Tibial artery (tissue), 4 donors: ENCODE measurements at regions of chr3 and their contacts with region 1.

Region 1: GRCh38 chr3:184135149-184135910 is at the start of gene EIF2B5:
- DNase-seq: peak; percentile 92 to 93
- H3K4me3 ChIP-seq: peak within 1 kb of the TSS; percentile 74 to 93
- H3K27ac ChIP-seq: peak within 1 kb of the TSS; percentile 86 to 95
- H3K4me1 ChIP-seq: peaks cover 0 to 25% (median 11%) of the 10 kb centered on the region in 4 donors
- H3K27me3 ChIP-seq: no peaks in the 10 kb centered on the region
- CTCF ChIP-seq: peak in 1 of 2 experiments; percentile 21

Region 2: DNA sequence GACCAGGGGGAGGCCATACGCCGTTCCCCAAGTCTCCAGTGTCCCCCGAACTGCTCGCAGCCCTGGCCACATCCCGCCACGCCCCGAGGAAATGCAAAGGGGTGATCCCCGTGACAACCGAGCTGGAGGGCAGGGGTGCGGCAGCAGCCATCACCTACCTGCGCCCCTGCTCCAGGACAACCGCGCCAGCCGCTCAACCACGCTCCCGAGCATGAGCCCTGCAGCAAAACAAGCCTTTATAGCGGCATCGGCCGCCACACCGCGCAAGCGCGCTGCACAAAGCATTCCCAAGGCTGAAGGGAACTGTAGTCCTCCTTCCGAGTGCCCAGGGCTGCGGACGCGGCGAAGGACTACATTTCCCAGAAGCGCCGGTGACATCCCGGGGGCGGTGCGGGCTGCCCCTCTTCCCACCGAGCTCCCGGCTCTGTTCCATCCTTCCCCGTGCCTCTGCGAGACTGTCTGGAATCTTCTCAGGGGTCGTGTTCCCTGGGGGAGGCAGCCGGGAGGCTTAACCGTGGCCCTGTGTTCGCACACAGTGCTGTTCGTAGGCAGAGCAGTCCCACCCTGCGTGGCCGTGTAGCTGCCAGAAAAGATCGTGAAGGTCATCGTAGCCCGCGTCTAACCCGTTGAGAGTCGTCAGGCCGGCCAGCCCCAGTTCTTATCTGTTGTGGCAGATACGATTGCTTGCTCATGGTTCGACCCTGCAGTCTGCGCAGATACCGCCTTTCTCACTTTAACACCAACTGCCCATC is 117.5 kb before region 1 on chr3 and contains the start of gene ABCC5:
- intact Hi-C with region 1: loop called (anchors 5 kb)
- DNase-seq: peak; percentile 89 to 95
- H3K4me3 ChIP-seq: peak within 1 kb of the TSS; percentile 85 to 100
- H3K27ac ChIP-seq: peak within 1 kb of the TSS; percentile 70 to 78
- H3K4me1 ChIP-seq: peaks cover 0 to 16% (median 10%) of the 10 kb centered on the region in 4 donors
- H3K27me3 ChIP-seq: no peaks in the 10 kb centered on the region
- CTCF ChIP-seq: peak in 1 of 2 experiments; percentile 22

Region 3: DNA sequence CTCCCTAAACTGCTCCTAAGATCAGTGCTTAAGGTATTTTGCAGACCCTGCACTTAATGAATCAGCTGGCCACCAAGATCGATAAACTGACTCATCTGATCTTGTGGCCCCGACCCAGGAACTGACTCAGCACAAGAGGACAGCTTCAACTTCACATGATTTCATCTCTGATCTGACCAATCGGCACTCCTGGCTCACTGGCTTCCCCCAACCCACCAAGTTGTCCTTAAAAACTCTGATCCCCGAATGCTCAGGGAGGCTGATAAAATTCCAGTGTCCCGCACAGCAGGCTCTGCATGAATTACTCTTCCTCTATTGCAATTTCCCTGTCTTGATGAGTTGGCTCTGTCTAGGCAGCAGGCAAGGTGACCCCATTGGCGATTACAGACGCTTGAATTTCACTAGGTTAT is 25.0 kb before region 1 on chr3:
- intact Hi-C with region 1: no loop called
- DNase-seq: no peak
- H3K4me3 ChIP-seq: no peak overlapping the region
- H3K27ac ChIP-seq: no peak overlapping the region
- H3K4me1 ChIP-seq: no peaks in the 10 kb centered on the region
- H3K27me3 ChIP-seq: peaks cover 0 to 5% of the 10 kb centered on the region in 2 donors
- CTCF ChIP-seq: no peak

Region 4: GRCh38 chr3:184154885-184155643 is 19.7 kb after region 1 on chr3 and contains the start of gene DVL3:
- intact Hi-C with region 1: loop called (anchors 2 kb)
- DNase-seq: peak; percentile 68 to 87
- H3K4me3 ChIP-seq: peak within 1 kb of the TSS; percentile 95 to 97
- H3K27ac ChIP-seq: peak within 1 kb of the TSS; percentile 94 to 98
- H3K4me1 ChIP-seq: peaks cover 0 to 52% (median 33%) of the 10 kb centered on the region in 4 donors
- H3K27me3 ChIP-seq: no peaks in the 10 kb centered on the region
- CTCF ChIP-seq: no peak

Region 5: GRCh38 chr3:184298759-184299496 is 163.6 kb after region 1 on chr3 and contains the start of gene PSMD2:
- intact Hi-C with region 1: loop called (anchors 5 kb)
- DNase-seq: peak; percentile 96 to 99
- H3K4me3 ChIP-seq: peak within 1 kb of the TSS; percentile 73 to 75
- H3K27ac ChIP-seq: peak within 1 kb of the TSS; percentile 68 to 85
- H3K4me1 ChIP-seq: peaks cover 0 to 25% (median 18%) of the 10 kb centered on the region in 4 donors
- H3K27me3 ChIP-seq: no peaks in the 10 kb centered on the region
- CTCF ChIP-seq: peak in 1 of 2 experiments; percentile 7

Region 6: DNA sequence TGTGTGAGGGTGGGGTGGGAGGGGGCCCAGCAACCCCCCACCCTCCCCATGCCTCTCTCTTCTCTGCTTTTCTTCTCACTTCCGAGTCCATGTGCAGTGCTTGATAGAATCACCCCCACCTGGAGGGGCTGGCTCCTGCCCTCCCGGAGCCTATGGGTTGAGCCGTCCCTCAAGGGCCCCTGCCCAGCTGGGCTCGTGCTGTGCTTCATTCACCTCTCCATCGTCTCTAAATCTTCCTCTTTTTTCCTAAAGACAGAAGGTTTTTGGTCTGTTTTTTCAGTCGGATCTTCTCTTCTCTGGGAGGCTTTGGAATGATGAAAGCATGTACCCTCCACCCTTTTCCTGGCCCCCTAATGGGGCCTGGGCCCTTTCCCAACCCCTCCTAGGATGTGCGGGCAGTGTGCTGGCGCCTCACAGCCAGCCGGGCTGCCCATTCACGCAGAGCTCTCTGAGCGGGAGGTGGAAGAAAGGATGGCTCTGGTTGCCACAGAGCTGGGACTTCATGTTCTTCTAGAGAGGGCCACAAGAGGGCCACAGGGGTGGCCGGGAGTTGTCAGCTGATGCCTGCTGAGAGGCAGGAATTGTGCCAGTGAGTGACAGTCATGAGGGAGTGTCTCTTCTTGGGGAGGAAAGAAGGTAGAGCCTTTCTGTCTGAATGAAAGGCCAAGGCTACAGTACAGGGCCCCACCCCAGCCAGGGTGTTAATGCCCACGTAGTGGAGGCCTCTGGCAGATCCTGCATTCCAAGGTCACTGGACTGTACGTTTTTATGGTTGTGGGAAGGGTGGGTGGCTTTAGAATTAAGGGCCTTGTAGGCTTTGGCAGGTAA is 210.2 kb after region 1 on chr3:
- intact Hi-C with region 1: no loop called
- DNase-seq: peak; percentile 73 to 82
- H3K4me3 ChIP-seq: no peak overlapping the region
- H3K27ac ChIP-seq: peak overlapping the region; percentile 16 to 21
- H3K4me1 ChIP-seq: peaks cover 0 to 11% (median 0%) of the 10 kb centered on the region in 4 donors
- H3K27me3 ChIP-seq: no peaks in the 10 kb centered on the region
- CTCF ChIP-seq: peak; percentile 39 to 48

Region 7: GRCh38 chr3:184481984-184482671 is 346.8 kb after region 1 on chr3:
- intact Hi-C with region 1: no loop called
- DNase-seq: no peak
- H3K4me3 ChIP-seq: no peak overlapping the region
- H3K27ac ChIP-seq: no peak overlapping the region
- H3K4me1 ChIP-seq: no peaks in the 10 kb centered on the region
- H3K27me3 ChIP-seq: peaks cover 0 to 39% of the 10 kb centered on the region in 2 donors
- CTCF ChIP-seq: no peak